B cell (primary cell): ENCODE measurements at regions of chr6 and their contacts with region 1.

Region 1: GRCh38 chr6:36735110-36736071 is 37.8 kb downstream of the RAB44 start:
- DNase-seq: peak; percentile 74
- ATAC-seq: peak; percentile 86
- H3K4me3 ChIP-seq: peak overlapping the region in 4 of 5 experiments; percentile 2 to 44 (median 22)
- H3K4me3 Mint-ChIP-seq: peak overlapping the region; percentile 75
- H3K27ac ChIP-seq: no peak overlapping the region
- H3K27ac Mint-ChIP-seq: peak overlapping the region; percentile 80
- H3K4me1 ChIP-seq: peaks cover 31 to 54% of the 10 kb centered on the region in 2 donors
- H3K4me1 Mint-ChIP-seq: peaks cover 42% of the 10 kb centered on the region
- H3K27me3 ChIP-seq: no peaks in the 10 kb centered on the region
- H3K27me3 Mint-ChIP-seq: no peaks in the 10 kb centered on the region
- CTCF ChIP-seq: peak; percentile 49

Region 2: GRCh38 chr6:36724514-36725390 is 10.6 kb before region 1 on chr6:
- CTCF ChIA-PET with region 1: interaction called, 13 read pairs
- POLR2A ChIA-PET with region 1: no interaction called
- intact Hi-C with region 1: no loop called
- DNase-seq: peak; percentile 63
- ATAC-seq: no peak
- H3K4me3 ChIP-seq: no peak overlapping the region
- H3K4me3 Mint-ChIP-seq: peak overlapping the region; percentile 1
- H3K27ac ChIP-seq: no peak overlapping the region
- H3K27ac Mint-ChIP-seq: peak overlapping the region; percentile 26
- H3K4me1 ChIP-seq: peaks cover 51 to 53% of the 10 kb centered on the region in 2 donors
- H3K4me1 Mint-ChIP-seq: peaks cover 58% of the 10 kb centered on the region
- H3K27me3 ChIP-seq: no peaks in the 10 kb centered on the region
- H3K27me3 Mint-ChIP-seq: no peaks in the 10 kb centered on the region
- CTCF ChIP-seq: peak; percentile 21

Region 3: DNA sequence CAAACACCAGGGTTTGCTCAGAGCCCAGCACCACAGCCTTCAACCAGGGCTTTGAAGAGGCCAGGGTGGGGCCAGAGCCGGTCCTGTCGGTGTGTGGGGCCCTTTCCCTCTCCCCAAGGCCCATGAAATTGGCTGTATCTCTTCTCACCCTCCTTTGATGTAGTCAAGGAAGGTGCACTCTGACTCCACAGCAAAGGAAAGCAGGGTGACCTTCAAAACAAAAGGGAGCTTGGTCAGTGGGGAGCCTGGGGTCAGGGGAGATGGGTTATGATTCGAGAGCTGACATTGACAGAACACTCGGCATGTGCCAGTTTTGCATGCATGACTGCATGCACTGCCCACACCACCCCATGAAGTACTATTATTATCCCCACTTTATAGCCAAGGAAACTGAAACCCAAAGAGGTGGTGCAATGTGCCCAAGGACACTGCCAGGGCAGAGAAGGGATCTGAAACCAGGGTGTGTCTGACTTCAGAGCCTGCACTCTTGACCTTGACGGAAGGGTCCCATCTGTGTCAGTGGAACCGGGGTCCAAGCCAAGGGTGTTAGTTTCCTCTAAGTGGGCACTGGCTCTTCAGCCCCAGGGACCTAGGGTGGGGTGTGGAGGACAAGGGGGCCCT is 17.6 kb after region 1 on chr6:
- CTCF ChIA-PET with region 1: interaction called, 27 read pairs
- POLR2A ChIA-PET with region 1: interaction called, 7 read pairs
- intact Hi-C with region 1: loop called (anchors 2 kb)
- DNase-seq: peak; percentile 80
- ATAC-seq: peak; percentile 66
- H3K4me3 ChIP-seq: peak overlapping the region in 4 of 5 experiments; percentile 7 to 91 (median 34)
- H3K4me3 Mint-ChIP-seq: peak overlapping the region; percentile 86
- H3K27ac ChIP-seq: peak overlapping the region; percentile 91 to 95
- H3K27ac Mint-ChIP-seq: peak overlapping the region; percentile 85
- H3K4me1 ChIP-seq: peaks cover 77 to 88% of the 10 kb centered on the region in 2 donors
- H3K4me1 Mint-ChIP-seq: peaks cover 89% of the 10 kb centered on the region
- H3K27me3 ChIP-seq: no peaks in the 10 kb centered on the region
- H3K27me3 Mint-ChIP-seq: no peaks in the 10 kb centered on the region
- CTCF ChIP-seq: no peak